Spleen (tissue), 13 donors: ENCODE measurements at regions of chr14 and their contacts with region 1.

Region 1: DNA sequence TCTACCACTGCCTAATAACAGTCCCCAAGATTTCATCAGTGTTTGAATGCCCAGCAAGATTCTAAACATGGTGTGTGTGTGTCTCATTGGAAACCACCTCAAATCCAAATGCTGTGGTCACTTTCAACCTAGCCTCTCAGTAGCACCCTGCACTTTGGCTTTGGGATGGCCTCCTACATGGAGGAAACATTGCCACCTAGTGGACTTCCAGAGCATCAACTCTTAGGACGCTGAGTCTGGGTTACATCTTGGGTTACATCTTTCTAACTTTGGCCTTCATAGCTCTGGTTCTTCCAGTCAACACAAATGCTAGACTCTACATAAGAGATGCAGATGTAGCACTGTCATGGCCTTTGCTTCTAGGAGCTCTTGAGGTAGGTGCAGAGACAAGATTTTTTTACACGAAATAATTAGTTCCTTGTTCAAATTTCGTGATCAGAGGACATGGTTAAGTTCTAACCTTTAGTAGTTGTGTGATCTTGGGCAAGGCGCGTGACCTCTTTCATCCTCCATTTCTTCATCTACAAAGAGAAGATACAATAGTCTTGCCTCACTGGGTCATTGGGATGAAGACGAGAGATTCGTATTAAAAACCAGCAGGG is 113.5 kb upstream of the VASH1 start:
- DNase-seq: no peak
- H3K4me3 ChIP-seq: no peak overlapping the region
- H3K27ac ChIP-seq: no peak overlapping the region
- H3K4me1 ChIP-seq: no peaks in the 10 kb centered on the region
- H3K27me3 ChIP-seq: peaks cover 0 to 25% (median 0%) of the 10 kb centered on the region in 7 donors
- CTCF ChIP-seq: peak in 10 of 11 experiments; percentile 16 to 83 (median 72)
- POLR2A ChIP-seq: no peak

Region 2: GRCh38 chr14:76424359-76424758 is 223.4 kb before region 1 on chr14:
- intact Hi-C with region 1: no loop called
- DNase-seq: no peak
- H3K4me3 ChIP-seq: no peak overlapping the region
- H3K27ac ChIP-seq: no peak overlapping the region
- H3K4me1 ChIP-seq: no peaks in the 10 kb centered on the region
- H3K27me3 ChIP-seq: peaks cover 0 to 6% (median 0%) of the 10 kb centered on the region in 7 donors
- CTCF ChIP-seq: no peak
- POLR2A ChIP-seq: no peak

Region 3: GRCh38 chr14:76456200-76456599 is 191.6 kb before region 1 on chr14:
- intact Hi-C with region 1: loop called (anchors 5 kb)
- DNase-seq: no peak
- H3K4me3 ChIP-seq: no peak overlapping the region
- H3K27ac ChIP-seq: no peak overlapping the region
- H3K4me1 ChIP-seq: no peaks in the 10 kb centered on the region
- H3K27me3 ChIP-seq: peaks cover 0 to 14% (median 0%) of the 10 kb centered on the region in 7 donors
- CTCF ChIP-seq: peak in 9 of 11 experiments; percentile 16 to 62 (median 48)
- POLR2A ChIP-seq: no peak

Region 4: DNA sequence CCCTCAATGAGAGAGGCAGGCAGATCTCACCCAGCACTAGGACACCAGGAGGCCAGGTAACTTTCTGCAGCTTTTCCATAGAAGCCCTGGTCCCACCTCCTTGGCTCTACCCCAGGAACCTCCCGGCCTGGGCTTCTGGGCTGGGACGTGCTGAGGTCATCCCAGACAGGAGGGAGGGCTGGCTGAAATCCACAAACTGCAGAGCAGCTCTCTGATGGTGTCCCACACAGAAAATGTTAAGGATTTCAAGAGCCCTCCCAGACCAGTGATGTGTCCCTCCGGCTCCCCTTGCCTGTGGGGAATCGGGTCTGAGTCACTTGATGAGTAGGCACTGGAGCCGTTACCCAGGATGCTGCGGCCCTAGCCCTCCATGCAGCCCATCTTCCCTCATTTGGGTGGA is 147.8 kb before region 1 on chr14:
- intact Hi-C with region 1: loop called (anchors 10 kb)
- DNase-seq: peak; percentile 57
- H3K4me3 ChIP-seq: no peak overlapping the region
- H3K27ac ChIP-seq: no peak overlapping the region
- H3K4me1 ChIP-seq: peaks cover 0 to 3% (median 0%) of the 10 kb centered on the region in 6 donors
- H3K27me3 ChIP-seq: peaks cover 0 to 45% (median 0%) of the 10 kb centered on the region in 7 donors
- CTCF ChIP-seq: no peak
- POLR2A ChIP-seq: no peak